ENCODE measurements at regions of chr2 and their contacts with region 1.

Region 1: DNA sequence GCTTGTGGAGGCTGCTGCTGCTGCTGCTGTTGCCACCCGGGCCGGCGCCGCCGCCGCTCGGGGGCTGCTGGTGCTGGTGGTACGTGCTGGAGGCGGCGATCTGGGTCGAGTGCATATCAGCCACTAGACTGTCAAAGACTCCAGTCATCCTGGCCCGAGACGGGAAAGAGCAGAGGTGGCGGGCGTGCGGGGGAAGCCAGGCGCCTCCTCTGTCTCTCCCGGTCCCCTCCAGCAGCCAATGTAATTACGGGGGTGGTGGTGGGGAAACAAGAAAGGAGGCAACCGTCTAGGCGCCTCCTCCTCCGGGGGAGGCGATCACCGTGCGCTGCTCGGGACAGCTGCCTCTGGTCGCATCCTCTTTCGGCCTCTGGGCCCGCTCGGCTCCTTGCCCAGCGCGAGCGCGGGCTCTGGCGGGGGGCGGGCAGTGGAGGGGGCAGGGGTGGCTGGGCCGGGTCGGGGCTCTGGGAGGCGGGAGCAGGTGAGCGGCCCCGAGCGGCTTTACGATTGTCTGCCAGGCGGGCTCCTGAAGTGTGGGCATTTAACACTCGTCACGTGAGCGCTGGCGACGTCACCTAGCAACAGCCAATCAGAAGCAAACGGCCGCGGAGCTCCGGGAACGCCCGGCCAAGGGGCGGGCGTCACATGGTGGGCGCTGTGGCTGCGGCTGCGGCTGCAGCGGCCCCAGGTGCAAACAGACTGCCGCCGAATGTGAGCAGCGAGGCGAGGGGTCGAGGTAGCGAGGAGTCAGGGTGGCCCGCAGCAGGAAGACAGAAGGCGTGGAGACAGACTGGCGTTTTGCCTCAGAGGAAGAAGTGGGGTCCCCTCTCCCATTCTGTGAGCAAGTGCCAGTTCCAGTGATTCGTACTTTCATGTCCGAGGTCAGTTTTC is at the start of gene DLX2:
- DNase-seq: peak; percentile 89 to 93
- H3K4me3 ChIP-seq: peak within 1 kb of the TSS; percentile 62
- H3K4me3 Mint-ChIP-seq: peak within 1 kb of the TSS; percentile 88
- H3K27ac Mint-ChIP-seq: peak within 1 kb of the TSS; percentile 48
- H3K4me1 ChIP-seq: peaks cover 11% of the 10 kb centered on the region
- H3K4me1 Mint-ChIP-seq: peaks cover 14% of the 10 kb centered on the region
- H3K27me3 ChIP-seq: no peaks in the 10 kb centered on the region
- H3K27me3 Mint-ChIP-seq: peaks cover 3% of the 10 kb centered on the region
- CTCF ChIP-seq: no peak
- total RNA-seq, gene DLX2: 0.79 and 0.82 TPM in 2 replicates

Region 2: GRCh38 chr2:171574149-171574795 is 528.4 kb before region 1 on chr2:
- CTCF ChIA-PET with region 1: no interaction called
- POLR2A ChIA-PET with region 1: no interaction called
- intact Hi-C with region 1: loop called (anchors 2 kb)
- DNase-seq: peak; percentile 71 to 87
- H3K4me3 ChIP-seq: no peak overlapping the region
- H3K4me3 Mint-ChIP-seq: no peak overlapping the region
- H3K27ac Mint-ChIP-seq: no peak overlapping the region
- H3K4me1 ChIP-seq: no peaks in the 10 kb centered on the region
- H3K4me1 Mint-ChIP-seq: no peaks in the 10 kb centered on the region
- H3K27me3 ChIP-seq: no peaks in the 10 kb centered on the region; the same call in 1 of the 2 replicates
- H3K27me3 Mint-ChIP-seq: no peaks in the 10 kb centered on the region
- CTCF ChIP-seq: peak; percentile 90 to 96

Region 3: GRCh38 chr2:171687287-171688128 is 415.1 kb before region 1 on chr2 and contains the start of gene DYNC1I2:
- CTCF ChIA-PET with region 1: no interaction called
- POLR2A ChIA-PET with region 1: no interaction called
- intact Hi-C with region 1: loop called (anchors 5 kb)
- DNase-seq: peak; percentile 88 to 93
- H3K4me3 ChIP-seq: peak within 1 kb of the TSS; percentile 89
- H3K4me3 Mint-ChIP-seq: peak within 1 kb of the TSS; percentile 98
- H3K27ac Mint-ChIP-seq: peak within 1 kb of the TSS; percentile 94
- H3K4me1 ChIP-seq: no peaks in the 10 kb centered on the region; the same call in 1 of the 2 replicates
- H3K4me1 Mint-ChIP-seq: peaks cover 7% of the 10 kb centered on the region
- H3K27me3 ChIP-seq: no peaks in the 10 kb centered on the region
- H3K27me3 Mint-ChIP-seq: no peaks in the 10 kb centered on the region
- CTCF ChIP-seq: no peak
- total RNA-seq, gene DYNC1I2: 62.9 and 69.6 TPM in 2 replicates

Region 4: DNA sequence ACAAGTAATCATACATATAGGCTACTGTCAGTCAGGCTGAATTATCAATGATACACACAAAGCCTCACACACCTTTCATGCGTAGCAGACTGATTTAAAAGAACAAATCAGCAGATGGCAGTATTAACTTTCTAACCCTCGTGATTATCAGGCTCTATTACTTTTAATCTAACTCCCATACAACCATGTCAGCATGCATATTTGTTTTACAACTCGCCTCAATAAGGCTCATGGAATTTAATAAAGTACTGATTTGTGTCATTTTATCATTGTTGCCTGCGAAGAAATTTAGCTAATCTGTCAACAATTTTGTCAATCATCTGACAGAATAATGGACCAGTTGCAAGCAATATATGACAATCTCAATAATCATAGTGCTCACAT is 291.4 kb before region 1 on chr2:
- CTCF ChIA-PET with region 1: interaction called, 3 read pairs
- POLR2A ChIA-PET with region 1: no interaction called
- intact Hi-C with region 1: loop called (anchors 1 kb)
- DNase-seq: peak in 1 of 2 experiments; percentile 26
- H3K4me3 ChIP-seq: no peak overlapping the region
- H3K4me3 Mint-ChIP-seq: no peak overlapping the region
- H3K27ac Mint-ChIP-seq: no peak overlapping the region
- H3K4me1 ChIP-seq: peaks cover 4% of the 10 kb centered on the region
- H3K4me1 Mint-ChIP-seq: no peaks in the 10 kb centered on the region
- H3K27me3 ChIP-seq: no peaks in the 10 kb centered on the region
- H3K27me3 Mint-ChIP-seq: no peaks in the 10 kb centered on the region
- CTCF ChIP-seq: peak; percentile 34 to 41

Region 5: GRCh38 chr2:171957061-171957460 is 145.6 kb before region 1 on chr2:
- CTCF ChIA-PET with region 1: interaction called, 3 read pairs
- POLR2A ChIA-PET with region 1: no interaction called
- intact Hi-C with region 1: loop called (anchors 1 kb)
- DNase-seq: peak in 1 of 2 experiments; percentile 15
- H3K4me3 ChIP-seq: no peak overlapping the region
- H3K4me3 Mint-ChIP-seq: no peak overlapping the region
- H3K27ac Mint-ChIP-seq: no peak overlapping the region
- H3K4me1 ChIP-seq: no peaks in the 10 kb centered on the region
- H3K4me1 Mint-ChIP-seq: no peaks in the 10 kb centered on the region
- H3K27me3 ChIP-seq: no peaks in the 10 kb centered on the region
- H3K27me3 Mint-ChIP-seq: no peaks in the 10 kb centered on the region
- CTCF ChIP-seq: no peak

Region 6: GRCh38 chr2:172084734-172085459 is 17.7 kb before region 1 on chr2:
- CTCF ChIA-PET with region 1: interaction called, 11 read pairs
- POLR2A ChIA-PET with region 1: interaction called, 16 read pairs
- intact Hi-C with region 1: loop called (anchors 1 kb)
- DNase-seq: peak; percentile 93
- H3K4me3 ChIP-seq: peak overlapping the region; percentile 49
- H3K4me3 Mint-ChIP-seq: peak overlapping the region; percentile 95
- H3K27ac Mint-ChIP-seq: peak overlapping the region; percentile 63
- H3K4me1 ChIP-seq: no peaks in the 10 kb centered on the region
- H3K4me1 Mint-ChIP-seq: no peaks in the 10 kb centered on the region
- H3K27me3 ChIP-seq: no peaks in the 10 kb centered on the region
- H3K27me3 Mint-ChIP-seq: peaks cover 14% of the 10 kb centered on the region
- CTCF ChIP-seq: no peak

Measured in Caco-2 (cell line).